Breast epithelium (tissue), 4 donors: ENCODE measurements at regions of chrX and their contacts with region 1.

Region 1: DNA sequence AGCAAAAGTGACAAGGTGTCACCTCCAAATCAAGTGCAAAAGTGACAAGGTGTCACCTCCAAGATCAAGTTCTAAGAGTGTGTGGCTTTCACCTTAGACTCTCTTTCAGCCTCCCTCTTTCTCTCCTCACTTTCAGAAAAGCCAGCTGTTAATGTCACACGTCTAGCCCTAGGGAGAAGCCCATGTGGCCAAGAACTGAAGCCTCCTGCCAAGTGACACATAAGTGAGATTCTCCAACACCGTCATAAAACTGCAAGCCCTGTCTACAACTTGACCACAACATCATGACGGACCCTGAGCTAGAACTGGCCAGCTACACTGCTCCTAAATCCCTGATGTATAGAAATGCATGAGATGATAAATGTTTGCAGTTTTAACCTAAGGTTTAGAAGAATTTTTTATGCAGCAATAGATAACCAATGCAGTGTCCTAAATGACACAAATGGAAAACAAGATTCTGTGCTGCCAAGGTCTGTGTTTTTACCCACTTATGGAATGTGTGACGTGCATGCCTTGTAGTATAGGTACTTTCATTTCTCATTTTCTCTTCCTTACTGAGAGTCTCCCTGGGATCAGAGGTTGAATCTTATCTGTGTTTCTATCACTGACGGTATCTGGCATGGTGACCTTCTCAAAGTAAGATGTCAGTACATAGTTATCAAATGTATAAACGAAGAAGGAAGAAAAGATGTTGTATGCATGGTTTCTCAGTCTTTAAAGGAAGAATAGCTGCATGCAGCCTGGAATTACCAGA is 25.0 kb downstream of the NLGN4X start:
- DNase-seq: no peak
- H3K4me3 ChIP-seq: no peak overlapping the region
- H3K27ac ChIP-seq: no peak overlapping the region
- H3K4me1 ChIP-seq: no peaks in the 10 kb centered on the region
- H3K27me3 ChIP-seq: no peaks in the 10 kb centered on the region
- CTCF ChIP-seq: no peak
- POLR2A ChIP-seq: no peak

Region 2: DNA sequence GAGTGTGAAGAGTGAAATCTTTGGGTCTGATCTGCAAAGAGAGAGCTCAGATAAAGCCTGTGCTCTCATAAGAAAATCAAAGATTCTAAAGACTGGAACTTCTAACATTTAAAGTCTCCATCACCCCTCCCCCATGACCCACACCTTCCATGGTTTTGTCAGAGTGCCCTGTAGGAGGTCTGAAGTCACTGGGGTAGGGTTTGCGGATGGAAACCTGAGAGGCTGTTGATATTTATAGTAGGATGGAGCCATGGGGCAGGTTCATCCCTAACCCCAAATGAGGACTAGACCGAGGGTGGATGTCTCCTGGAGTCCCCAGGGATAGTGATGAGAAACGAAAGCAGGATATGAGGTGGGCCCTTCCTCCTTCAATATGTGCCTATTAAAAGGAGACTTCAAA is 53.4 kb after region 1 on chrX:
- intact Hi-C with region 1: no loop called
- DNase-seq: no peak
- H3K4me3 ChIP-seq: no peak overlapping the region
- H3K27ac ChIP-seq: no peak overlapping the region
- H3K4me1 ChIP-seq: no peaks in the 10 kb centered on the region
- H3K27me3 ChIP-seq: no peaks in the 10 kb centered on the region
- CTCF ChIP-seq: no peak
- POLR2A ChIP-seq: no peak

Region 3: DNA sequence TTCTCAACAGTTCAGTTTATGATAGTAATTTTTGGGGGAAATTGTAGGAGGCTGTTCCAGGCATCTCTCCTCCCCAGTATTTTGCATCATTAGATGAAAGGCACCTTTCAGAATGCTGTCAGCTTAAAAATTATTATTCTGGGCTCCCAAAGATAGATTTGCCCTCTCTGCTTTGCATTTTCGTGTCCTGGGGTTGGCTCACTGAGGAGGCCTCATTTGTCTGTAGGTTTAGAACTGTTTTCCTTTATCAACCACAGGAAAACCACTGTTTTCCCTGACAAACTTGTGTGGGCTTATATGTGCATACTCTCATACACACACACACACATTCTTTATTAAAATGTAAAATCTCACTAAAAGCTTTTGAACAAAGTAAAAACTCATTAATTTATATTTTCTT is 528.5 kb after region 1 on chrX:
- intact Hi-C with region 1: no loop called
- DNase-seq: no peak
- H3K4me3 ChIP-seq: no peak overlapping the region
- H3K27ac ChIP-seq: no peak overlapping the region
- H3K4me1 ChIP-seq: no peaks in the 10 kb centered on the region
- H3K27me3 ChIP-seq: no peaks in the 10 kb centered on the region
- CTCF ChIP-seq: no peak
- POLR2A ChIP-seq: no peak

Region 4: GRCh38 chrX:7351926-7352325 is 1148.3 kb after region 1 on chrX:
- intact Hi-C with region 1: loop called (anchors 5 kb)
- DNase-seq: no peak
- H3K4me3 ChIP-seq: no peak overlapping the region
- H3K27ac ChIP-seq: no peak overlapping the region
- H3K4me1 ChIP-seq: no peaks in the 10 kb centered on the region
- H3K27me3 ChIP-seq: no peaks in the 10 kb centered on the region
- CTCF ChIP-seq: no peak
- POLR2A ChIP-seq: no peak